ENCODE measurements at regions of chr18 and their contacts with region 1.

Region 1: GRCh38 chr18:42028247-42028832 is 73.3 kb downstream of the PIK3C3 start:
- DNase-seq: peak; percentile 12
- ATAC-seq: peak; percentile 41; the same call in 1 of the 3 replicates
- H3K4me3 ChIP-seq: no peak overlapping the region
- H3K27ac ChIP-seq: no peak overlapping the region
- H3K4me1 ChIP-seq: no peaks in the 10 kb centered on the region
- H3K27me3 ChIP-seq: no peaks in the 10 kb centered on the region
- CTCF ChIP-seq: peak; percentile 56
- EP300 ChIP-seq: no peak
- POLR2A ChIP-seq: no peak
- RAD21 ChIP-seq: no peak

Region 2: GRCh38 chr18:41938445-41938844 is 89.9 kb before region 1 on chr18:
- CTCF ChIA-PET with region 1: no interaction called
- POLR2A ChIA-PET with region 1: no interaction called
- in situ Hi-C with region 1: no loop called
- intact Hi-C with region 1: no loop called
- DNase-seq: no peak
- ATAC-seq: peak; percentile 47; the same call in 1 of the 3 replicates
- H3K4me3 ChIP-seq: no peak overlapping the region
- H3K27ac ChIP-seq: no peak overlapping the region
- H3K4me1 ChIP-seq: no peaks in the 10 kb centered on the region
- H3K27me3 ChIP-seq: no peaks in the 10 kb centered on the region; a peak in 1 of 5 replicates
- CTCF ChIP-seq: no peak
- EP300 ChIP-seq: no peak
- POLR2A ChIP-seq: no peak
- RAD21 ChIP-seq: no peak

Region 3: GRCh38 chr18:43563780-43564179 is 1535.4 kb after region 1 on chr18:
- CTCF ChIA-PET with region 1: interaction called, 4 read pairs
- POLR2A ChIA-PET with region 1: no interaction called
- in situ Hi-C with region 1: no loop called
- intact Hi-C with region 1: loop called (anchors 5 kb)
- DNase-seq: peak; percentile 12
- ATAC-seq: peak; percentile 84
- H3K4me3 ChIP-seq: no peak overlapping the region
- H3K27ac ChIP-seq: no peak overlapping the region
- H3K4me1 ChIP-seq: no peaks in the 10 kb centered on the region
- H3K27me3 ChIP-seq: no peaks in the 10 kb centered on the region
- CTCF ChIP-seq: peak; percentile 67
- EP300 ChIP-seq: no peak
- POLR2A ChIP-seq: no peak
- RAD21 ChIP-seq: peak; percentile 20; the same call in 1 of the 2 replicates

Region 4: GRCh38 chr18:43596105-43596712 is 1567.9 kb after region 1 on chr18:
- CTCF ChIA-PET with region 1: no interaction called
- POLR2A ChIA-PET with region 1: no interaction called
- in situ Hi-C with region 1: no loop called
- intact Hi-C with region 1: loop called (anchors 1 kb)
- DNase-seq: peak; percentile 13
- ATAC-seq: peak; percentile 84
- H3K4me3 ChIP-seq: no peak overlapping the region
- H3K27ac ChIP-seq: no peak overlapping the region
- H3K4me1 ChIP-seq: no peaks in the 10 kb centered on the region
- H3K27me3 ChIP-seq: no peaks in the 10 kb centered on the region
- CTCF ChIP-seq: peak; percentile 62
- EP300 ChIP-seq: no peak
- POLR2A ChIP-seq: no peak
- RAD21 ChIP-seq: no peak

Measured in HepG2 (cell line).